Calu3 (cell line): ENCODE measurements at regions of chr12 and their contacts with region 1.

Region 1: DNA sequence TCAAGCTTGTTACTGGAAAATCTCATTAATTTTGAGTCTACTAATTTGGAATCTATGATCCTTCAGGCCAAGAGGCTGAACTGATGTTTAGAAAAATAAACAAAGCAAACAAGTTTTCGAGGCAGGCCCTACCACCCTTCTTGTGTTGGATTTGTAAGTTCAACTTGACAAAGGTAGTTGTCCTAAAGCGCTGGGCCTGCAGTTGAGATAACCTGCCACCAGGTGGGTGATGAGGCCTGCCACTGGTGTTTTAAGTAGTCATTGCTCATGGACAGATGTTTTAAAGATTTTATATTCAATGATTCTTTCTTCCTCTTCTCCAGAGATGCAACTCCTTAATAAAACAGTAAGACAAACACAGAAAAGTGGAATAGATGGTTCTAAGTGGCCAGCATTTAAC is 19.4 kb downstream of the ACVRL1 start:
- DNase-seq: peak; percentile 62
- H3K4me3 Mint-ChIP-seq: no peak overlapping the region
- H3K27ac Mint-ChIP-seq: no peak overlapping the region
- H3K4me1 Mint-ChIP-seq: no peaks in the 10 kb centered on the region
- H3K27me3 Mint-ChIP-seq: no peaks in the 10 kb centered on the region
- CTCF ChIP-seq: peak; percentile 28

Region 2: DNA sequence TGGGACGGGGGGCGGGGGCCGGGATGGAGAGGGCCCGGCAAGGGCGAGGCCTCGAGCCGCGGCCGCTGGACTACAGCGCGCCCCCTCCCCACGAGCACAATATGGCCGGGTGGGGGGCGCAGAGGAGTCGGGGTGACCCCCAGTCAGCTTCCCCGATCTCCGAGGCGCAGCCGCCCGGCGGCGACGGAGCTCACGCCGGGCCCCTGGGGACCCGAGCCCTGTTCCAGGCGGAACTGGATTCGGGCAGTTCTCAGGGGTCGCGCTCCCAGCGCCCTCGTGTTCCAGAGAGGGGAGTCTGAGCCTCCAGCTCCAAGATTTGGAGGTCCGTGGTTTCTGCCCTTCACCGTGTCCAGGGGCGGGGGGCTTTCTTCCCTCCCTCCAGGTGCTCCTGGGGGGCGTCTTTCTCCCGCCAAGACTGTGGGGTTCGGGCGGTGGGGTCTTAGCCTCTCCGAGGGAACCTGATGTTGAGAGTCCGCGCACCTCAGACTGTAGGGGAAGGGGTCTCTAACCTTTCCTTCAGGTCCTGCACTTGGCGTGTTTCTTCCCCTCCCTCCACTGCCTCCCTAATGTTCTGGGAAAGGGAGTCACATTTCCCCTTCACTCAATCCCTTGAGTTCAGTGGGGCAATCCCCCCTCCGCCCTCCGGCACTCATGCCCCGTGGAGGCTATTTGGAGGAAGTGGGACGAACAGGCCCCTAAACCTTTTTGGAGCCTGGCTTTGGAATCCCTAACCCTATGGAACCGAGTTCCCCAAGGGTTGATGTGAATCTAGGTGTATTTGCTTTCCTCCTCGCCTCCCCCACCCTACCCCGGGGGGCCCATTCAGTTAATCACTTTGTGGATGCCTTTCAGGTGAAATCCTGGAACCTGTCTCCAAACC is 25.4 kb after region 1 on chr12:
- CTCF ChIA-PET with region 1: no interaction called
- intact Hi-C with region 1: loop called (anchors 1 kb)
- DNase-seq: no peak
- H3K4me3 Mint-ChIP-seq: peak overlapping the region; percentile 91
- H3K27ac Mint-ChIP-seq: peak overlapping the region; percentile 25
- H3K4me1 Mint-ChIP-seq: peaks cover 35% of the 10 kb centered on the region
- H3K27me3 Mint-ChIP-seq: peaks cover 31% of the 10 kb centered on the region
- CTCF ChIP-seq: no peak

Region 3: GRCh38 chr12:51980051-51980808 is 53.5 kb after region 1 on chr12:
- CTCF ChIA-PET with region 1: interaction called, 7 read pairs
- intact Hi-C with region 1: loop called (anchors 1 kb)
- DNase-seq: peak; percentile 56
- H3K4me3 Mint-ChIP-seq: no peak overlapping the region
- H3K27ac Mint-ChIP-seq: no peak overlapping the region
- H3K4me1 Mint-ChIP-seq: peaks cover 19% of the 10 kb centered on the region
- H3K27me3 Mint-ChIP-seq: no peaks in the 10 kb centered on the region
- CTCF ChIP-seq: peak; percentile 82

Region 4: DNA sequence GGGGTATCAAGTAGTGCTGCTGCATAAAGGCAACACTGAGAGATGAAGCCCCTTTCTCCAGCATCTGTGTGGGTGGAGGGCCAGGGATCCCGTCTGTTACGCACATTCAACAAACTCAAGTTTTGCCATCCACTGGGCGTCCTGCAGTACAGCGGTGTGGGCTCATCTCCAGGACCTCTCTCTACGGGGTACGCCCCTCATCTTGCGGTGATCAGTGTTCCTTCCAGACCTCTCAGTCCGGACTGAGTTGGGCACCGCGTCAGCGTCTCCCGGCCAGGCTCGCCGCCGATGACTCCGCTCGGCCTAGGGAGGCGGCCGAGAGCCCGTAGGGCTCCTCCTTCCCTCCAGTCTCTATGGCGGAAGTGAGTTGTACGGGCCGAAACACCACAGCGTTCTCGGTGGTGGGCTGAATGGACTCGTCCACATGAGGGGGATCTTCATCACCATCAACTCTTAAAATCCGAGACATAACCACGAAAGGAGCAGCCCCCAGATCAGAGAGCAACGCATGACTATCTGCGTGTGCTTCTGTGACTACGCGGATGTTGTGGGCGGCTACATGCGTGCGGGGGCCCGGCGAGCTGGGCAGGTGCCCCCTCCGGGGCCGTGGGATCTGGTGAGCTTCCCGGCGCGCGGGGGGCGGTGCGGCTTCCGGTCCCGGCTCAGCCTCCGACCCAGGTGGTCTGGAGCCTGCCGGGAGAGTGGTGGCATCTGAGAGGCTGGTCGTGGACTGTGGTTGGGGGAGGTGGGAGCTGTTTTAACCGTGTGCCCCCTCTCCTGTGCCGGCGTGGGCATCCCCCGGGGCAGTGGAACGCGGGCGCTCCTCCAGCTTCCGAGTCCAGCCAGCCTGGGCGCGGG is 142.8 kb after region 1 on chr12 and contains the start of gene ATG101:
- CTCF ChIA-PET with region 1: no interaction called
- intact Hi-C with region 1: no loop called
- DNase-seq: peak; percentile 86
- H3K4me3 Mint-ChIP-seq: peak within 1 kb of the TSS; percentile 95
- H3K27ac Mint-ChIP-seq: peak within 1 kb of the TSS; percentile 99
- H3K4me1 Mint-ChIP-seq: peaks cover 26% of the 10 kb centered on the region
- H3K27me3 Mint-ChIP-seq: peaks cover 11% of the 10 kb centered on the region
- CTCF ChIP-seq: peak; percentile 20
- total RNA-seq, gene ATG101: 32.8 and 35.0 TPM in 2 replicates

Region 5: GRCh38 chr12:52203075-52203921 is 276.6 kb after region 1 on chr12:
- CTCF ChIA-PET with region 1: no interaction called
- intact Hi-C with region 1: no loop called
- DNase-seq: peak; percentile 66
- H3K4me3 Mint-ChIP-seq: no peak overlapping the region
- H3K27ac Mint-ChIP-seq: peak overlapping the region; percentile 62
- H3K4me1 Mint-ChIP-seq: peaks cover 50% of the 10 kb centered on the region
- H3K27me3 Mint-ChIP-seq: no peaks in the 10 kb centered on the region
- CTCF ChIP-seq: no peak